Common myeloid progenitor, CD34-positive (primary cell): ENCODE measurements at regions of chr18 and their contacts with region 1.

Region 1: GRCh38 chr18:2958819-2959298 is 54.1 kb downstream of the LPIN2 start:
- DNase-seq: peak in 2 of 3 donors; percentile 52 to 60
- H3K4me3 ChIP-seq: peak overlapping the region in 1 of 7 experiments; percentile 41
- H3K27ac ChIP-seq: peak overlapping the region in 1 of 2 experiments; percentile 4
- H3K4me1 ChIP-seq: peaks cover 36 to 59% (median 46%) of the 10 kb centered on the region in 4 experiments
- H3K27me3 ChIP-seq: no peaks in the 10 kb centered on the region

Region 2: DNA sequence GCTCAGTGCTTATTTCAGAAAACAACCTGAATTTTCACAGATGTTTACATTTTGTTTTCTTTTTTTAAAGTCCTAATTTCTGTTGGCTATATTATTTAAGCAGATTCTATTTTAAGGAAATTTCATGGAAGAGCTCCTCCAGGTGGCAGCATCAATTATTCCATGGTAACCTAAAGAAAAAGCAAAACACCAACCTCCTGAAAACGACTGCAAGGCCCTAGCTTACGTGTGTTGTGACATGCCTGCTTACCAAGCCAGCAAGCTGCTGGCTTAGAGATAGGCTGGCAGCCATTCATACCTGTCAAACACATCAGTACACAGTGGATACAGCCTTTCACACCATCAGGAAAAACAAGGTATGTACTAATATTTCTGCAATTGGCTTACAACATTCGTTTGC is 10.8 kb before region 1 on chr18:
- CTCF ChIA-PET with region 1: interaction called, 44 read pairs
- POLR2A ChIA-PET with region 1: no interaction called
- DNase-seq: peak; percentile 47 to 71 (median 59)
- H3K4me3 ChIP-seq: no peak overlapping the region
- H3K27ac ChIP-seq: no peak overlapping the region
- H3K4me1 ChIP-seq: peaks cover 0 to 5% (median 0%) of the 10 kb centered on the region in 4 experiments
- H3K27me3 ChIP-seq: no peaks in the 10 kb centered on the region

Region 3: GRCh38 chr18:2978646-2979045 is 19.8 kb after region 1 on chr18:
- CTCF ChIA-PET with region 1: interaction called, 12 read pairs
- POLR2A ChIA-PET with region 1: interaction called, 3 read pairs
- DNase-seq: no peak
- H3K4me3 ChIP-seq: peak overlapping the region in 1 of 7 experiments; percentile 40
- H3K27ac ChIP-seq: no peak overlapping the region
- H3K4me1 ChIP-seq: peaks cover 48 to 68% (median 58%) of the 10 kb centered on the region in 4 experiments
- H3K27me3 ChIP-seq: no peaks in the 10 kb centered on the region